SK-N-SH (cell line): ENCODE measurements at regions of chr1 and their contacts with region 1.

Region 1: DNA sequence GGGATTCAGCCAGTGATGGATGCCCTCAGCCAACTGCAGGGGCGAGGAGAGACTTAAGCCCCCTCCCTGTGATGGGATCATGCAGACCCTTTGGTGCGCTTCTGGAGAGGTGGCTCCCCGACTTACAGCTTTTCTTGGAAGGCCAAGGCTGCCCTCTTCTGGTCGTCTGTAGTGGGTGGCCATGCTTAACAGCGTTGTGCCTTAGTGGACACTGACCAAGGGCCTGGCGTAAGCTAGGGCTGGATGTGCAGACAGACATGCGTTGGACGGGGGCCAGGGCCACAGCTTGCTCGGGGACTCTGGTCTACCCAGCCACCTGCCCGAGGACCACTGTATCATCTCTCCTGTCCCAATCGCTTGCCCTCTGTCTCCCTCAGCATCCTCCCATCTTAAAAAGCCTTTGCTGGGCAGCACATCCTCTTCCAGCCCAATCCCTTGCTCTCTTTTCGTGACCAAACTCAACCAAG is 5.5 kb downstream of the AZIN2 start:
- DNase-seq: peak; percentile 80
- H3K4me3 ChIP-seq: no peak overlapping the region; a peak in 1 of 4 replicates
- H3K27ac ChIP-seq: no peak overlapping the region
- H3K4me1 ChIP-seq: peaks cover 5 to 14% of the 10 kb centered on the region in 2 experiments; a peak in 1 of 4 replicates
- H3K27me3 ChIP-seq: no peaks in the 10 kb centered on the region
- CTCF ChIP-seq: peak; percentile 80
- EP300 ChIP-seq: no peak
- RAD21 ChIP-seq: peak; percentile 93

Region 2: DNA sequence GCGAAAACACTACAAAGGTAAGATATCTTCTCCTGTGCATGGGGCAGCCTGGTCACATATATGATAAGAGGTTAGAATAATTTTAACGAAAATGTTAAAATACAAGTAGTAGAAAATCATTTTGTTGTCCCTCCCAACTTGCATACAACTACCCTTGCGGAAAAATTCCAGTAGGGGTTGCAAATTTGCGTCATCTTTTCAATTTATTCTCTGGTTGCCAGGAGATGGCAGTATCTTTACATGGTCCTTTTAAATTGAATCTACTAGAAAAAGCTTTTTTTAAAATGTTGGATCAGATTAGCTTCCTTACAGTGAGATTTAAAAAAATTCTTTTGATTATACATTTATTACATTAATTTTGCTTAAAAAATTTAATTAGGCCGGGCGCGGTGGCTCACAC is 258.1 kb before region 1 on chr1:
- CTCF ChIA-PET with region 1: interaction called, 16 read pairs
- POLR2A ChIA-PET with region 1: no interaction called
- DNase-seq: peak; percentile 37
- H3K4me3 ChIP-seq: no peak overlapping the region
- H3K27ac ChIP-seq: no peak overlapping the region
- H3K4me1 ChIP-seq: no peaks in the 10 kb centered on the region
- H3K27me3 ChIP-seq: no peaks in the 10 kb centered on the region
- CTCF ChIP-seq: peak; percentile 52
- EP300 ChIP-seq: no peak
- RAD21 ChIP-seq: peak; percentile 57

Region 3: GRCh38 chr1:32876341-32877210 is 209.8 kb before region 1 on chr1:
- CTCF ChIA-PET with region 1: interaction called, 44 read pairs
- POLR2A ChIA-PET with region 1: no interaction called
- DNase-seq: peak; percentile 87
- H3K4me3 ChIP-seq: no peak overlapping the region; a peak in 1 of 4 replicates
- H3K27ac ChIP-seq: no peak overlapping the region
- H3K4me1 ChIP-seq: peaks cover 0 to 21% of the 10 kb centered on the region in 2 experiments; a peak in 1 of 4 replicates
- H3K27me3 ChIP-seq: no peaks in the 10 kb centered on the region
- CTCF ChIP-seq: peak; percentile 82
- EP300 ChIP-seq: no peak
- RAD21 ChIP-seq: peak; percentile 57

Region 4: GRCh38 chr1:32900951-32901822 is 185.2 kb before region 1 on chr1 and contains the start of gene TMEM54:
- CTCF ChIA-PET with region 1: interaction called, 14 read pairs
- POLR2A ChIA-PET with region 1: no interaction called
- DNase-seq: peak; percentile 83
- H3K4me3 ChIP-seq: peak within 1 kb of the TSS; percentile 58 to 77
- H3K27ac ChIP-seq: no peak within 1 kb of the TSS
- H3K4me1 ChIP-seq: peaks cover 0 to 11% of the 10 kb centered on the region in 2 experiments; a peak in 1 of 4 replicates
- H3K27me3 ChIP-seq: peaks cover 7% of the 10 kb centered on the region; the same call in 1 of the 2 replicates
- CTCF ChIP-seq: peak; percentile 6; the same call in 1 of the 2 replicates
- EP300 ChIP-seq: no peak
- RAD21 ChIP-seq: no peak
- polyA plus RNA-seq, gene TMEM54: 54.5 and 66.6 TPM in 2 replicates

Region 5: GRCh38 chr1:33111970-33112369 is 25.6 kb after region 1 on chr1:
- CTCF ChIA-PET with region 1: interaction called, 13 read pairs
- POLR2A ChIA-PET with region 1: no interaction called
- DNase-seq: peak; percentile 18
- H3K4me3 ChIP-seq: no peak overlapping the region
- H3K27ac ChIP-seq: no peak overlapping the region
- H3K4me1 ChIP-seq: no peaks in the 10 kb centered on the region
- H3K27me3 ChIP-seq: no peaks in the 10 kb centered on the region
- CTCF ChIP-seq: peak; percentile 22; the same call in 1 of the 2 replicates
- EP300 ChIP-seq: no peak
- RAD21 ChIP-seq: peak; percentile 61